Dendritic cell treated with granulocyte-macrophage colony-stimulating factor and Interleukin-4, amounts not matched to agents 40 ng/mL and 50 ng/mL, for 4 days (primary cell): ENCODE measurements at regions of chr16 and their contacts with region 1.

Region 1: DNA sequence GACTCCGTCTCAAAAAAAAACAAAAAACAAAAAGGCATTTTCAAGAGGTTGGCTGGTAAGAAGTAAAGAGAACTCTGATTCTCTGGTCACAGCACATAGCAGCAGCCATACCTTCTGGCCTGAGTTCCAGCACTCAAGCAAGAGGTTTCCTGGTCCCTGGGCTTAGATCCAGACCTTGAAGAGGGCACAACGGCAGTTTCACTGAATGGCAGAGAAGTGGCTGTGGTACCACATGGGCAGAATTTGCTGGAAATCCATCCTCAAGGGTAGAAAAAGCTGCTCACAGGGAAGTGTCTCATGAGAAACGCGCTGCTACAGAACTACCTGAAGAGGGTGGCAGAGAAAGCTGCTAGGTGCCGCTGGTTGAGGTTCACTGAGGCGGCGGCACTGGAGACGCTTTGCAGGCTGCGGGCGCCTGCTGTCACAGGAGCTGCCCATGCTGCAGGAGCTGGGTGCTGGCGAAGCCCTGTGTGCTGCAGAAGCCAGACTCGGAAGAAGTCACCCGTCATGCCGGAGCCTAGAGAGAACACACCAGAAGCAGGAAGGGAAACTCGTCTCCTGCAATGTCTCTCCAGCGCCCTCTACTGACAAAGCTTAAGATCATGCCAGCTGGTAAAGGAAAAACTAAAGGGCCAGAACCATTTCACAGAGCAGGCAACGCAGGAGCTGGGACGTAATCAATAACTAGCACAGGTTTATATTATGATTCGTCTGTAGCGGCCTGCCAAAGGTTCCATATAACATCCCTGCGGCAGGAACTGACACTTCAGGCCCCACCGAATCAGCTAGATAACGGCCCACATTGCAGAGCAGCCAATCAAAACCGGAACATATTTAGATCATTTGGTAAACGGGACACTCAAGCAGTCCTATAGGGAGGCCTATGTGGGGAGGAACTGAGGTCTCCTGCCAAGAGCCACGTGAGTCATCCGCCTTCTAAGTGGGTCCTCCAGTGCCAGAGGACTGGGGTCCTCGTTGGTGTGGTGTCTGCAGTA is 5.4 kb upstream of the ZNF213 start:
- H3K4me3 Mint-ChIP-seq: peak overlapping the region; percentile 86
- H3K27ac Mint-ChIP-seq: peak overlapping the region; percentile 87
- H3K4me1 Mint-ChIP-seq: peaks cover 47% of the 10 kb centered on the region
- H3K27me3 Mint-ChIP-seq: no peaks in the 10 kb centered on the region

Region 2: DNA sequence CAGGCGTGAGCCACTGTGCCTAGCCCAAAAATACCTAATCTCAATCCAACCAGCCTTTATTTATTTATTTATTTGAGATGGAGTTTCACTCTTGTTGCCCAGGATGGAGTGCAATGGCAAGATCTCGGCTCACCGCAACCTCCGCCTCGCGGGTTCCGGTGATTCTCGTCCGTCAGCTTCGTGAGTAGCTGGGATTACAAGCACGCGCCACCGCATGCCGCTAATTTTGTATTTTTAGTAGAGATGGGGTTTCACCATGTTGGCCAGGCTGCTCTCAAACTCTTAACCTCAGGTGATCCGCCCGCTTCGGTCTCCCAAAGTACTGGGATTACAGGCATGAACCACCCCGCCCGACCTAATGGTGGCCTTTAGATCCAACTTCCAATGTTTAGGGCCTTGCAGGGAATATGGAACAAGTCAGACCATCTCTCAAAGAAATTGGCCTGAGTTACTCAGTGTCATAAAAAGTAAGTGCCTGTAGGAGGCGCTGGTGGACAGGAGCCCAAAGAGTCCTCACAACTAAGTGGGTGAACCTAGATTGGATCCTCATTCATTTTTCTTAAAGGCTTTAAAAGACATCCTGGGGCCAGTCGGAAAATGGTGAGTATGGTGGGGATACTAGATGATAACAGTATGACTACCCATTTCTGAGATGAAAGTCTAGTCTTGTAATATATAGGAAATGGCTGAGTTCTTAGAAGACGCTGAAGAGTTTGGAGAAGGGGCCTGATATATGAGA is 35.0 kb before region 1 on chr16:
- intact Hi-C with region 1: loop called (anchors 1 kb)
- H3K4me3 Mint-ChIP-seq: no peak overlapping the region
- H3K27ac Mint-ChIP-seq: no peak overlapping the region
- H3K4me1 Mint-ChIP-seq: peaks cover 26% of the 10 kb centered on the region
- H3K27me3 Mint-ChIP-seq: peaks cover 29% of the 10 kb centered on the region